ENCODE measurements at regions of chr17 and their contacts with region 1.

Region 1: GRCh38 chr17:58317421-58318064 is 11.1 kb downstream of the TSPOAP1 start:
- DNase-seq: peak; percentile 72
- ATAC-seq: peak; percentile 95
- H3K4me3 ChIP-seq: no peak overlapping the region
- H3K27ac ChIP-seq: peak overlapping the region; percentile 30; the same call in 1 of the 2 replicates
- H3K4me1 ChIP-seq: peaks cover 8 to 17% of the 10 kb centered on the region in 2 experiments; a peak in 3 of 4 replicates
- H3K27me3 ChIP-seq: no peaks in the 10 kb centered on the region
- CTCF ChIP-seq: peak; percentile 97 to 99 (median 99)
- POLR2A ChIP-seq: no peak
- RAD21 ChIP-seq: peak; percentile 100

Region 2: GRCh38 chr17:58020401-58020800 is 297.1 kb before region 1 on chr17:
- CTCF ChIA-PET with region 1: no interaction called
- POLR2A ChIA-PET with region 1: no interaction called
- RAD21 ChIA-PET with region 1: no interaction called
- intact Hi-C with region 1: no loop called
- DNase-seq: no peak
- ATAC-seq: no peak
- H3K4me3 ChIP-seq: no peak overlapping the region
- H3K27ac ChIP-seq: no peak overlapping the region
- H3K4me1 ChIP-seq: peaks cover 24 to 30% of the 10 kb centered on the region in 2 experiments
- H3K27me3 ChIP-seq: no peaks in the 10 kb centered on the region
- CTCF ChIP-seq: no peak
- POLR2A ChIP-seq: no peak
- RAD21 ChIP-seq: no peak

Region 3: DNA sequence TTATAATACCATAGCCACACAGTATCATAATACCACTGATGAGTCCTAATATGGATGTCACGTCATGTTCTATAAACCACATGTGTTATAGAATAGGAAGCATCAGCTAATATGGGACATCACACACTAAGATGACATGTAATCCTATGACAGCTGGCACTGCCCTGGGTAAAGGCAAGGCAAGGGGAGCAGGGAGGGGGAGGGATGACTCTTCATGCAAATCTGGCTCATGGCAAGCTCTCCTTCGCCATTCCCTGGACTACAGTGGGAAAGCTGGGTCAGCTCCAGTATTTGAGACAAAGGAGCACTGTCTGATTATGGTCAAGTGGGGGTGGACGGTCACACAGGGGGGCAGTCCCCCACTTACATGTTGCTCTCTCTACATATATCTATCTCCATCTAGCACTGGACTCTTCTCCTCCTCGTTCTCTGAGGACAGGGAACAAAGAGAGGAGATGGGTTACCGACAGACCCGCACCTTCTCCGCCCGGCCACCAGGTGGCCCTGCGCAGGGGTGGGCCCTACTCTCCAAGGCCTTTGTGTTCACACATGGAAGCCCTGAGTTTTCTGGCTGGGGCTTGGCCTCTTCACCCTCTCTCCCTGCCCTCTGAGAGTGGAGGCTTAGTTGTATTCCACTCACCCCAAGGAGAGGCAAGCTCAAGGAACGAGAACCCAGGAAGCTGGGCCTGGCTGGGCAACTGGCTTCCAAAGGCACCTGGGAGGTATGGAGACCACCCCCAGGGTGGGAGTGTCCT is 13.4 kb before region 1 on chr17:
- CTCF ChIA-PET with region 1: interaction called, 27 read pairs
- POLR2A ChIA-PET with region 1: no interaction called
- RAD21 ChIA-PET with region 1: interaction called in 1 of 2 experiments, 4 read pairs
- intact Hi-C with region 1: no loop called
- DNase-seq: peak; percentile 62
- ATAC-seq: peak; percentile 96
- H3K4me3 ChIP-seq: no peak overlapping the region
- H3K27ac ChIP-seq: no peak overlapping the region; the same call in 1 of the 2 replicates
- H3K4me1 ChIP-seq: peaks cover 0 to 9% of the 10 kb centered on the region in 2 experiments; a peak in 2 of 4 replicates
- H3K27me3 ChIP-seq: no peaks in the 10 kb centered on the region
- CTCF ChIP-seq: peak; percentile 82 to 99 (median 99)
- POLR2A ChIP-seq: no peak
- RAD21 ChIP-seq: peak; percentile 68

Region 4: DNA sequence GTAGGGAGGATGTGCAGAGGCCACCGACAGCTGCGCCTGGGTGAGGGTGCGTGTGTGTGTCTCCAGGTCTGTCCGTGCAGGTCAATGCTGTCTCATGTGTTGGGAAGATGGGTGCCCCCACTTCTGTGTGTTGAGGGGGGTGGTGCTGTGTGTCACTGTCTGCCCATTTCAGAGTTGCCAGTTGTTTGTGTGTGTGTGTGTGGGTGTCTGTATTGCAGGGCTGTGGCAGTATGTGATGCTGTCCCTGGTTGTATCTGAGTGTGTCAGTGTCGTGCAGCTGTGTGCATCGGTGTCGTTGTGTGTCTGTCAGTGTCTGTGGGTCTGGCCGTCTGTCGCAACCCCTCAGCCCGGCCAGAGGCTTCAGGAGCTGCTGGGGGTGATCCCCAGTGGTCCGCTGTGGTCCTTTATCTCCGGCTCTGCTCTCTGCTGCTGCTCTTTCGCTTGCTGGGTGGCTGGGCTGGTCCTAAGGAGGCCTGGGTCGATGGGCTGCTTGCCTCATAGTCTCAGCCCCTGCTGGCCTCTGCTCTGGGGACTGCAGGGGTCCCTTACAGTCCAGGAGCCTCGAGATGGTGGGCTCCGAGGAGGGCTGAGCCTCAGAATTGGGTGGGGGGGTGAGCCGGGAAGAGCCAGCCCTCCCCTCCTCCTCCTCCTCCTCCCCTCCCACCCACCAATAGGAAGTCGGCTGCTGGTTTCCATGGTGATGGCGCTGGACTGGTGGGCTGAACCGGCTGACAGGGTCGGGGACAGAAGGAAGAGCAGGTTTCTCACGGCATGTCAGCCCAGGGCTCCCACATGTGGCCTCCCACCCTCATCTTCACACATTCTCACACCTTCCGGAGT is 10.9 kb after region 1 on chr17 and contains the start of gene TSPOAP1:
- CTCF ChIA-PET with region 1: interaction called, 16 read pairs
- POLR2A ChIA-PET with region 1: no interaction called
- RAD21 ChIA-PET with region 1: interaction called in 1 of 2 experiments, 3 read pairs
- intact Hi-C with region 1: no loop called
- DNase-seq: no peak
- ATAC-seq: no peak
- H3K4me3 ChIP-seq: no peak within 1 kb of the TSS
- H3K27ac ChIP-seq: no peak within 1 kb of the TSS
- H3K4me1 ChIP-seq: peaks cover 3 to 12% of the 10 kb centered on the region in 2 experiments; a peak in 3 of 4 replicates
- H3K27me3 ChIP-seq: no peaks in the 10 kb centered on the region
- CTCF ChIP-seq: no peak
- POLR2A ChIP-seq: no peak
- RAD21 ChIP-seq: no peak
- total RNA-seq, gene TSPOAP1: 0.27 TPM

Region 5: DNA sequence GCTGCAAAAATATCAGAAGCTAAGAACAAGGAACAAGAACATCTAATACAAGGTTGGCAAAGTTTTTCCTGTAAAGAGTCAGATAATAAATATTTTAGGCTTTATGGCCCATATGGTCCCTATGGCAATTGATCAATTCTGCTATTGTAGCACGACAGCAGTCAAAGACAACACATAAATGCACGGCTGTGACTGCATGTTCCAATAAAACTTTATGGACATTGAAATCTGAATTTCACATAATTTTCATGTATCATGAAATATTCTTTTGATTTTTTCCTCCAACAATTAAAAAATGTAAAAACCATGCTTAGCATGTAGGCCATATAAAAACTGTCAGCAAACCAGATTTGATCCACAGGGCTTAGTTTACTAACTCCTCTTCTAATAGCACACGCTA is 110.3 kb after region 1 on chr17:
- CTCF ChIA-PET with region 1: interaction called, 61 read pairs
- POLR2A ChIA-PET with region 1: interaction called, 11 read pairs
- RAD21 ChIA-PET with region 1: interaction called, 10 to 19 read pairs
- intact Hi-C with region 1: loop called (anchors 1 kb)
- DNase-seq: no peak
- ATAC-seq: peak; percentile 39
- H3K4me3 ChIP-seq: peak overlapping the region in 1 of 2 experiments; percentile 42; a peak in 2 of 4 replicates
- H3K27ac ChIP-seq: peak overlapping the region; percentile 46; the same call in 1 of the 2 replicates
- H3K4me1 ChIP-seq: peaks cover 15 to 19% of the 10 kb centered on the region in 2 experiments
- H3K27me3 ChIP-seq: no peaks in the 10 kb centered on the region
- CTCF ChIP-seq: no peak; a peak in 1 of 6 replicates
- POLR2A ChIP-seq: no peak
- RAD21 ChIP-seq: no peak

Region 6: DNA sequence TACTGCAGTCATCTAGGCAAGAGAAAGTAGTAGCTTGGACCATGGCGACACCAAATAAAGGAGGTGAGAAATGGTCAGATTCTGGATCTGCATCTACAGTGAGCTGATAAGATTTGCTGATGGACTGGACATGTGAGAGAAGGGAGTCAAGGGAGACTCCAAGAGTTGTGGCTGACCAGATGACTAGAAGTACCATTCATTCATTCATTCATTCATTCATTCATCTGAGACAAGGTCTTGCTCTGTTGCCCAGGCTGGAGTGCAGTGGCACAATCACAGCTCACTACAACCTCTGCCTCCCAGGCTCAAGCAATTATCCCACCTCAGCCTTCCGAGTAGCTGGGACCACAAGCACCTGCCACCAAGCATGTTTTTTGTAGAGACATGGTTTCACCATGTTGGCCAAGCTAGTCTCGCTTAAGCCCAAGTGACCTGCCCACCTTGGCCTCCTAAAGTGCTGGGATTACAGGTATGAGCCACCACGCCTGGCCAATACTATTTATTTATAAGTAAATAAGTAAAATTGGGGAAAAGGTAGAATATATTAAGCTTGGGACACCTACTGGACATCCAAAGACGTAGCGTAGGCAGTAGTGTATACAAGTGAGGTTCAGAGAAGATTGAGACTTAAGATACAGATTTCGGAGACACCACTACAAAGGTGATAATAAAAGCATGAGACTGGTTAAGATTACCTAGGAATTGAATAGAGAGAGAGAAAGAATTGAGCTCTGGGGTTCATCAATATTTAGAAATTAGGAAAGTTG is 115.4 kb after region 1 on chr17:
- CTCF ChIA-PET with region 1: interaction called, 61 read pairs
- POLR2A ChIA-PET with region 1: interaction called, 11 read pairs
- RAD21 ChIA-PET with region 1: interaction called, 10 to 19 read pairs
- intact Hi-C with region 1: loop called (anchors 1 kb)
- DNase-seq: no peak
- ATAC-seq: peak; percentile 73
- H3K4me3 ChIP-seq: no peak overlapping the region
- H3K27ac ChIP-seq: no peak overlapping the region
- H3K4me1 ChIP-seq: peaks cover 11 to 13% of the 10 kb centered on the region in 2 experiments
- H3K27me3 ChIP-seq: no peaks in the 10 kb centered on the region
- CTCF ChIP-seq: peak; percentile 48 to 67 (median 61)
- POLR2A ChIP-seq: no peak
- RAD21 ChIP-seq: peak; percentile 75

Region 7: DNA sequence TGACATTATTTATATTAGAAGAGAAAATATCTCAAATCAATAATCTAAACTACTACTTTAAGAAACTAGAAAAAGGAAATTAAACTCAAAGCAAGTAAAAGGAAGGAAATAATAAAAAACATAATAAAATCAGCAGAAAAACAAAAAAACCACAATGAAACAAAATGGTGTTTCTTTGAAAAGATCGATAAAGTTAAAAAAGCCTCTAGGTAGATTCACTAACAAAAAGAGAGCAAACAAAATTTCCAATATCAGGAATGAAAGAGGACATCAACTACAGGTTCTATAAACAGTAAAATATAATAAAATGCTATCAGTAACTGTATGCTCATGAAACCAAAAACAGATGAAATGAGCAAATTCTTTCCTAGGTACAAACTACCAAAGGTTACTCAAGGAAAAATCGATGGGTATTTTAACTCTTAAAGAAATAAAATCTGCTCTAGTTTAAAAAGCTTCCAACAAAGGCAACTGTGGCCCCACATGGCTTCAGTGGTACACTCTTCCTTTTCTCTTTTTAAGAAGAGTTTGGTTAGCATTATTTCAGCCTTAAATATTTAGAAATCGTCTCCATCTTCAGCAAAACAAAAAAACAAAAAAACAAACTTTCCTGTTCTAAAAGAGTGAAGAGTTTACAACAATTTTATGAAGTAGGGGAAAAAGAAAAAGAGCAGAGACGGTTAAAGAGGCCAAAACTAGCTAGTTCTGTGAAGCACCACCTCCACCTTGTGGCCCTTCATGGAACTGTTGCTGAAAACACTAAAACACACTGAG is 687.0 kb after region 1 on chr17:
- CTCF ChIA-PET with region 1: interaction called, 7 read pairs
- POLR2A ChIA-PET with region 1: no interaction called
- RAD21 ChIA-PET with region 1: no interaction called
- intact Hi-C with region 1: loop called (anchors 10 kb)
- DNase-seq: peak; percentile 59
- ATAC-seq: peak; percentile 88
- H3K4me3 ChIP-seq: no peak overlapping the region
- H3K27ac ChIP-seq: no peak overlapping the region
- H3K4me1 ChIP-seq: no peaks in the 10 kb centered on the region
- H3K27me3 ChIP-seq: no peaks in the 10 kb centered on the region
- CTCF ChIP-seq: peak; percentile 91 to 99 (median 98)
- POLR2A ChIP-seq: no peak
- RAD21 ChIP-seq: peak; percentile 97